Caco-2 (cell line): ENCODE measurements at regions of chr17 and their contacts with region 1.

Region 1: DNA sequence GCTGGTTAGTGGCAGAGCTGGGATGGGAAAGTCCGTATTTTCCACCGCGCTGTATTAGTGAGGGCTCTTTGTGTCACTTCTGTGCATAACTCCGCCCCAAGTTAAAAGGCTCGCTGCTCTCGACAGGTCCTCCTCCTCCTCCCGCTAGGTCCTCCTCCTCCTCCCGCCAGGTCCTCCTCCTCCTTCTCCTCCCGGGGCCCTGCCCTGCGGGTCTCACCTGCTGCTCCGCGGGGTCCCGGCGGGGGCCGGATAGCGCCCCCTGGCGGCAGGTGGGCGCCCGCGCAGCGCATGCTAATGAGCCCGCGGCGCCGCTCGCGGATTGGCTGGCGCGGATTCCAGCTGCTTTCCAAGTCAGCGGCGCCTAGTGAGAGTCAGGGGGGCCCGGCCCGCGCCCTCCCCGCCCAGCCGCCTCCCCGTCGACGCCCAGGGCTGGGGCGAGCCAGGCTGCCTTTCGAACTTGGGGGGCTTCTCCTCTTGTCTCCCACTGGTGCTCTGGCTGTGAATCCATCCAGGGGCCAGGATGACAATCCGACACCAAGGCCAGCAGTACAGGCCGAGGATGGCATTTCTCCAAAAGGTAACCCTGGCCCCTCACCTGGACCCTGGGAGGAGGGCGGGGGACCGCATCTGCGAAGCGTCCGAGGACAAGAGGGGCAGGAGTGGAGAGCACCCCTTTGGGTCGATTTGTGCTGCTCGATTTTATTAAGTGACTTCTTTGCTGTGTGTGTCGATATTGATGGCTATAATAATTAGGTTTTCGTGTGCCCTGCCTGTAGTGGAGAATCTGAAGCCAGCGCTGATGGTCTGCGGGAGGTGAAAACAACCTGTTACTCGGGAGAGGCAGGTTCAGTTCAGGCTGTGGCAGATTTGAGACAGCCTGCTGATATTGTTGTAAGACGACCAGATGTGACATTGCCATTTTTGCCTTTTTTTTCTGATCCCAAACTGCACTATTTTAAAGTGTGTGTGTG is at the start of gene RGS9:
- DNase-seq: peak; percentile 84 to 89
- H3K4me3 ChIP-seq: peak within 1 kb of the TSS; percentile 33
- H3K4me3 Mint-ChIP-seq: peak within 1 kb of the TSS; percentile 71
- H3K27ac Mint-ChIP-seq: no peak within 1 kb of the TSS
- H3K4me1 ChIP-seq: peaks cover 7% of the 10 kb centered on the region
- H3K4me1 Mint-ChIP-seq: peaks cover 6% of the 10 kb centered on the region
- H3K27me3 ChIP-seq: no peaks in the 10 kb centered on the region
- H3K27me3 Mint-ChIP-seq: peaks cover 25% of the 10 kb centered on the region
- CTCF ChIP-seq: peak; percentile 82 to 99
- total RNA-seq, gene RGS9: 5.5 and 6.3 TPM in 2 replicates

Region 2: DNA sequence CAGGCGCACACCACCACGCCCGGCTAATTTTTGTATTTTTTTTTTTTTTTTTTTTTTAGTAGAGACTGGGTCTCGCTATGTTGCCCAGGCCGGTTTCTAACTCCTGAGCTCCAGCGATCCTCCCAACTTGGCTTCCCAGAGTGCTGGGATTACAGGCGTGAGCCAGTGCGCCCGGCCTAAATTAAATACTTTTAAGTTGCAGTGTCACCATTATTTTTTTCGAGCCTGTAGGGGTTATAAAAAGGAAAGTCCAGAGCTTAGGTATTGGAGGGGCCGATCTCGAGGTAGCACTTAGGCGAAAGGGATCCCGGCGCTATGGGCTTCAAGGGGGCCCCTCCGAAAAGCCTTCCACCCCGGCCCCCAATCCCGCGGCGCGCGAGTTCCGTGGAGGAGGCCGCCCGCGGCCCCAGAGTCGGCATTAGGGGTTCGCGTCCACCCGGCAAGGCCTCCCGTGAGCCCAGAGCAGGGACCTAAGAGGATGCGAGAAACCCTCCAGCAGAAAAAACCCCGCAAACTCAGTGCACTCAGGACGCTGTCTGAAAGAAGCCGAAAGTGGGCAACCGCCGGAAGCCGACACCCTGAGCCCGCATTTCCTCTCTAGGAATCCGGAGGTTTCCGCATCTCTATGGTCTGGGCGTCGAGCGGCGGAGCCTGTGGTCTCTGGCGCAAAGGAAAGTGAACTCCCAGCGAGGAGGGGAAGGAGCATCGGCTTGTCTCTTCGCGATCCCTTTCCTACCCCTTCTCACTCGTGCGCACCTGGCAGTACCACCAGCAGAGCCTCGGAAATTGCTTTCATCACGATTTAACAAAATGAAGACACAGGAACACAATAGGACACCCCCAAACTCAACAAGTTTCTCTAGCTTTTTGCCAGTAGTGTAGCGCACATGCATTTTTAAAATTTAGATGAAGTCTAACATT is 14.2 kb before region 1 on chr17:
- CTCF ChIA-PET with region 1: no interaction called
- POLR2A ChIA-PET with region 1: interaction called, 9 read pairs
- intact Hi-C with region 1: loop called (anchors 2 kb)
- DNase-seq: peak; percentile 93 to 94
- H3K4me3 ChIP-seq: peak overlapping the region; percentile 61
- H3K4me3 Mint-ChIP-seq: peak overlapping the region; percentile 89
- H3K27ac Mint-ChIP-seq: peak overlapping the region; percentile 88
- H3K4me1 ChIP-seq: no peaks in the 10 kb centered on the region
- H3K4me1 Mint-ChIP-seq: no peaks in the 10 kb centered on the region
- H3K27me3 ChIP-seq: no peaks in the 10 kb centered on the region
- H3K27me3 Mint-ChIP-seq: peaks cover 6% of the 10 kb centered on the region
- CTCF ChIP-seq: no peak

Region 3: DNA sequence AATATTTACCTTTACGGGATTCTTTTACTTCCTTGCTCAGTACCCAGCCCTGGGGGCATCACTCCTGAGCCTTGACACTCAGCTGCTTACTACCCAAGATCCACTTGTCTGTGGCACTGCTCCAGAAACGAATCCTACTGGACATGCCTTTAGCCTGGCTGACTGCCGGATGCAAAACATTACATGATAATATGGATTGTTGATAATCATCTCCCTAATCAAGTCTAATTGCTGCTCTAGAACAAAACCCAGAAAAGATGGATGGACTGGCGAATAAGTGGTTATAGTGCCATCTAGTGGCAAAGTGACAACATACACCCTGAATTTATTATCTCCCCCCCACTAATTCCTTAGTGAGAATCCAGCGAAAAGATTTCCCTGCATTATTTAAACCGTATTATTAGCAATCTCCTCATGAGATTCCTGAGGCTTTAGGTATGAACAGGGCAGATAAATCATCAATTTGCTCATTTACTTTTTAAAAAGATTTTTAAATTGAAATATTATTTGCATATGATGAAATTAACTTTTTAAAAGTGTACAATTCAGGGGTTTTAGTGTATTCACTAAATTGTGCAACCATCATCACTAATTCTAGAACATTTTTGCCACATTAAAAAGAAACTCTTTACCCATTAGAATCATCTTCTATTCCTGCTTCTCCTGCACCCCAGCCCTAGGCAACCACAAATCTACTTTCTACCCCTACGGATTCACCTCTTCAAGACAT is 61.5 kb after region 1 on chr17:
- CTCF ChIA-PET with region 1: no interaction called
- POLR2A ChIA-PET with region 1: no interaction called
- intact Hi-C with region 1: loop called (anchors 1 kb)
- DNase-seq: peak in 1 of 2 experiments; percentile 45
- H3K4me3 ChIP-seq: no peak overlapping the region
- H3K4me3 Mint-ChIP-seq: no peak overlapping the region
- H3K27ac Mint-ChIP-seq: no peak overlapping the region
- H3K4me1 ChIP-seq: no peaks in the 10 kb centered on the region
- H3K4me1 Mint-ChIP-seq: peaks cover 2% of the 10 kb centered on the region
- H3K27me3 ChIP-seq: no peaks in the 10 kb centered on the region
- H3K27me3 Mint-ChIP-seq: peaks cover 4% of the 10 kb centered on the region
- CTCF ChIP-seq: peak; percentile 69 to 81